Aorta (tissue), 5 donors: ENCODE measurements at regions of chr16 and their contacts with region 1.

Region 1: GRCh38 chr16:322476-323143 is 29.9 kb downstream of the AXIN1 start:
- DNase-seq: no peak
- ATAC-seq: no peak
- H3K4me3 ChIP-seq: no peak overlapping the region
- H3K27ac ChIP-seq: no peak overlapping the region
- H3K4me1 ChIP-seq: no peaks in the 10 kb centered on the region
- H3K27me3 ChIP-seq: no peaks in the 10 kb centered on the region

Region 2: DNA sequence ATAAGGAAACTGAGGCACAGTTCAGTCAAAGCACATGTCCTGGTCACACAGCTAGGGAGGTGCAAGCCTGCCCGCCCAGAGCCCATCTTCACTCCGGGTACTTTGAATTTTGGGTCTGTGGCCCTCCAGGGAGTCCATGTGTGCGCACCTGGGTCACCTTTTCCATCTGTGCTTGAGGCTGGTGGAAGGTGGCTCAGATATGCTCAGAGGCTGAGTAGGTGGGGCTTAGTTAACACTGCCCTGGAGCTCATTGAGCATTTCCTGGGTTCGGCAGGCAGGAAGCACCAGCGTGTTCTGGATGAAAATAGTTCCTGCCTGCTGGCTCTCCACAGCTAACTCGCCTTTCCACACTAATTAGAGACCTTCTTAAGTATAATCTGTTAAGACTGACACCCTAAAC is 68.8 kb before region 1 on chr16:
- intact Hi-C with region 1: no loop called
- DNase-seq: no peak
- ATAC-seq: no peak
- H3K4me3 ChIP-seq: no peak overlapping the region
- H3K27ac ChIP-seq: no peak overlapping the region
- H3K4me1 ChIP-seq: no peaks in the 10 kb centered on the region
- H3K27me3 ChIP-seq: no peaks in the 10 kb centered on the region

Region 3: DNA sequence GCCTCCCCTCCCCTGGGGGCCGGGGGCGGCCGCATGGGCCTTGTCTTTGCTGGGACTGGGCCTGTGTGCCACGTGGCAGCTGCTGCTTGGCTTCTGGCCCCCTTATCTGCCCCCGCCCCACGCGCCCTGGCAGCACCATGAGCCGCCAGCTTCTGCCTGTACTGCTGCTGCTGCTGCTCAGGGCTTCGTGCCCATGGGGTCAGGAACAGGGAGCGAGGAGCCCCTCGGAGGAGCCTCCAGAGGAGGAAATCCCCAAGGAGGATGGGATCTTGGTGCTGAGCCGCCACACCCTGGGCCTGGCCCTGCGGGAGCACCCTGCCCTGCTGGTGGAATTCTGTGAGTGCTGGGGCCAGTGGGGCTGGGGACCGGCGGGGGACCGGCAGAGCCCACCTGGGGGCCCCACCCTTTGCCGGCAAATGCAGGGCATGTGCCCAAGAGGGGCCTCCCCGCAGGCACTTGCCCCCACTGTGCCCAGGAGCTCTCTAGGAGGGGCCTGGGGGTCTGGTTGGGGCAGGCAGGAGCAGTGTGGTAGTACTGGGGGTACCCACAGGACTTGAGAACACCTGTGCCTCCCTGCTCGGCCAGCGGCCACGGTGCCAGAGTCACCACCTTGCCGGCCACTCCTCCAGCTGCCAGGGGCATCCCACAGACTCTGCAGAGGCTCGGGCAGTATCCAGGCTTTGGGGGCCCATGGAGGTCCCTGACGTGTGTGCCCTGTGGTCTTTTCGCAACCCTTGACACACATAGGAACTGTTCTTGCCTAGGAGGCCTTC is 39.4 kb before region 1 on chr16 and contains the start of gene PDIA2:
- intact Hi-C with region 1: loop called in 1 of 2 experiments (anchors 2 kb)
- DNase-seq: no peak
- ATAC-seq: no peak
- H3K4me3 ChIP-seq: no peak within 1 kb of the TSS
- H3K27ac ChIP-seq: no peak within 1 kb of the TSS
- H3K4me1 ChIP-seq: no peaks in the 10 kb centered on the region
- H3K27me3 ChIP-seq: no peaks in the 10 kb centered on the region
- total RNA-seq, gene PDIA2: 1.6 TPM in 1 of 2 donors, not detected in the other